ENCODE measurements at regions of chr11 and their contacts with region 1.

Region 1: GRCh38 chr11:12673924-12674570 is at the start of gene TEAD1:
- DNase-seq: peak; percentile 96
- ATAC-seq: peak; percentile 99
- total RNA-seq, gene TEAD1: 126 TPM

Region 2: GRCh38 chr11:11848891-11849746 is 824.9 kb before region 1 on chr11:
- intact Hi-C with region 1: no loop called
- DNase-seq: peak; percentile 67
- ATAC-seq: peak; percentile 82

Region 3: DNA sequence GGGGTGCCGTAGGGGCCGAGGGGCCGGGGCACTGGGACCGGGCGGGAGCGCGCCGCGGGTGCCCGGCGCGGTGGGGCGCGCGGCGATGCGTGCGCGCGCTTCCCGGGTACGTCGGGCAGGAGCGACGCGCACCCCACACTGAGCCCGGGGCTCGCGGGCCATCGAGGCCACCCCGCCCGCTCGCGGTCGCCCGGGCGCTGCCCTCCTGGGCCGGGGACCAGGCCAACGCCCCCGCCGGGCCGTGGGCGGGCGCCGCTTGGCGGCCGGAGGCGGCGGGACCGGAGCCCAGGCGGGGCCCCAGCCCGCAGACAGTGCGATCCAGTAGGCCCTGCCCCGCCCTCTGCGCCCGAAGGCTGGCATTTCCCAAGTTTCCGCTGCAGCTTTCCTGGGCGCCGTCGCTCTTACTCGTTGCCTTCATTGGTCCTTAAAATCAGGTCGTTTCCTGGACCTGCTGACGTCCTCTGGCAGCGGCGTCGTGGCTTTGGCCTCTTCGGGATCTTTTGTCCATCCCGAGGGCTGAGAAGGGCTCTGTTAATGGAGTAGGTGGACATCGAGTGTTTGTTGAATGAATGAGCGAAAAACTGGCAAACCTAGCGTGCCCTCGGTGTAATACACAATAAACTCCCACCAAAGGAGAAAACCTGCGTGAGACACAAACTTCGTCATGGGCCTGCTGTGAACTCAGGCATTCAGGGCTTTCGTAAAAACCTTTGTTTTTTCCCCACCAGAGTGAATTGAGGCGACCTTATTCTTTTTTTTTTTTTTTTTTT is 296.0 kb before region 1 on chr11:
- intact Hi-C with region 1: loop called (anchors 2 kb)
- DNase-seq: peak; percentile 85
- ATAC-seq: peak; percentile 58

Region 4: GRCh38 chr11:12556788-12557384 is 117.2 kb before region 1 on chr11:
- intact Hi-C with region 1: loop called (anchors 5 kb)
- DNase-seq: peak; percentile 84
- ATAC-seq: peak; percentile 72

Region 5: DNA sequence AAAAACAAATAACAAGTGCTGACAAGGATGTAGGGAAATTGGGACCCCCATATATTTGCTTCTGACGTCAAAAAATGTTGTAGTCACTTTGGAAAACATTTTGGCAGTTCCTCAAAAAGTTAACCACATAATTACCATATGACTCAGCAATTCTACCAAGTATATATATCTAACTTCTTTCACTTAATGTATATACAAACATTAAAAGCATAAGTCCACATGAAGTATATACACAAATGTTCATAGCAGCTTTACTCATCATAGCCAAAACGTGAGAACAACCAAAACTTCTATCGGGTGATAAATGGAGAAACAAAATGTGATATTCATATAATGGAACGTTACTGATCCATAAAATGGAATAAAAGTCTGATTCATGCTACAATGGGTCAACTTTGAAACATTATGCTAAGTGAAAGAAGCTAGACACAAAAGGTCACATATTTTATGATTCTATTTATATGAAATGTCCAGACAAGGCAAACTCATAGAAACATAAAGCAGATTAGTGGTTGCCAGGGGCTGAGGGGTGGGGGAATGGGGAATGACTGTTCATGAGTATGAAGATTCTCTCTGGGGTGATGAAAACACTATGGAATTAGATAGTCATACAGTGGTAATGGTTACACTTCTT is 48.5 kb before region 1 on chr11:
- intact Hi-C with region 1: no loop called
- DNase-seq: no peak
- ATAC-seq: no peak

Region 6: DNA sequence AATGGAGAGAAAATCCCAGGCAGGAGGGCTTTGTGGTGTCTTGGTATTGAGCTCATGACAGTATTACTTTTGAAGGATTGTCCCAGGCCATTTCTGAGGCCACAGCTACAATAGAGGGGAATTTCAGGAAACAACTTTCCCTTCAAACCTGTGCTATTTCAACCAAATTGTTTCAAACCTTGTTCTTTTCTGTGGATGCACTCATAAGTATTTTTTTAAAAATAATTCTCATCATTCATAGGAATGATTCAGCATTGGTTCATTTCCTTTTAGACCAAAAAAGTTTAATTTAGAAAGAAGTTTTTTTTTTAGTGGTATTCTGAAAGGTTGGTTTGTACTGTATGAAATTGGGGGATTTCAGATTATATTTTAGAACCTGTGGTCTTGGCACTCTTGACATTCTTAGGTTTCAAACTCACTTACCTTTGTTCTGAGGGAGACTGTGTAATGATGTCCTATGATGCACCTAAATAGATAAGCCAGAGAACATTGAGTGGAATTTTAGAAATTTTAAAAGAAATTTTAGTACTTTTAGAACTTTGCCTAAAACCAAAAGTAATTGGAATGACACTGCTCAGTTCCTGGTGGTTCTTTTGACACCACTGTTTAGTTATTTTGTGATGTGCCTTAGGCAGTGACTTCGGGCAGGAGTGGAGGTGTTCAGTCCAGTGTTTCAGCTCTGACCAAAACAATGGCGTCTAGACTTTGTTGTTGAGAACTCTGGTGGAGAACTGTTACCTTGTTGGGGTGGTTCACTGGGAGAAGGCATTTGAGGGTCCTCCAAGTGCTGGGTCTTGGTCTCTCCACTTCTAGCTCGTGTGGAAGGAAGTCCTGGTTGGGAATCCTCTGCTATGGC is 12.4 kb after region 1 on chr11:
- intact Hi-C with region 1: no loop called
- DNase-seq: no peak
- ATAC-seq: no peak

Region 7: DNA sequence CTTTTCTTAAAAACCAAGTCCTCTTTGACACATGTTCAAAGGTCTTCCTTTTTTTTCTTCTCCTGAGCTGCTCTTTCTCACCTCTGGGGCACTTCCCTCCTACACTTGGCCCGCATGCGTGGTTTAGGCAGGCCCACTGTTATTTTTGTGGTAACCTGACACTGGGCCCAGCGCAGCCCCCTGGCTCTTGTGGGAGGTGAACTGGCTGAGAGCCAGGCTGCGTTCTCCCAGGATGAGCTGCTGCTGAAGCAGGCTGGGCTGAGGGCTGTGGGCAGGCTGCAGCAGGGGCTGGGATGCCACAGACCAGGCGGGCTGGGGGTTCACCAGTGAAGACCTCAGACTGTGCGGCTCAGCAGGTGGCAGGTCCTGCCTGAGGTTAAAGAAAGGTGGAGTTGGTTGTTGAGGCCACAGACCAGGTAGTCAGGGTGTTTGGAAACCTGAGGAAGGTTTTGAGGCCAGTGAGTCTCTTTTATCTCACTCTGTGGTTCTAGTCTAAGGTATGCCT is 72.6 kb after region 1 on chr11:
- intact Hi-C with region 1: loop called (anchors 2 kb)
- DNase-seq: peak; percentile 77
- ATAC-seq: peak; percentile 76

Region 8: DNA sequence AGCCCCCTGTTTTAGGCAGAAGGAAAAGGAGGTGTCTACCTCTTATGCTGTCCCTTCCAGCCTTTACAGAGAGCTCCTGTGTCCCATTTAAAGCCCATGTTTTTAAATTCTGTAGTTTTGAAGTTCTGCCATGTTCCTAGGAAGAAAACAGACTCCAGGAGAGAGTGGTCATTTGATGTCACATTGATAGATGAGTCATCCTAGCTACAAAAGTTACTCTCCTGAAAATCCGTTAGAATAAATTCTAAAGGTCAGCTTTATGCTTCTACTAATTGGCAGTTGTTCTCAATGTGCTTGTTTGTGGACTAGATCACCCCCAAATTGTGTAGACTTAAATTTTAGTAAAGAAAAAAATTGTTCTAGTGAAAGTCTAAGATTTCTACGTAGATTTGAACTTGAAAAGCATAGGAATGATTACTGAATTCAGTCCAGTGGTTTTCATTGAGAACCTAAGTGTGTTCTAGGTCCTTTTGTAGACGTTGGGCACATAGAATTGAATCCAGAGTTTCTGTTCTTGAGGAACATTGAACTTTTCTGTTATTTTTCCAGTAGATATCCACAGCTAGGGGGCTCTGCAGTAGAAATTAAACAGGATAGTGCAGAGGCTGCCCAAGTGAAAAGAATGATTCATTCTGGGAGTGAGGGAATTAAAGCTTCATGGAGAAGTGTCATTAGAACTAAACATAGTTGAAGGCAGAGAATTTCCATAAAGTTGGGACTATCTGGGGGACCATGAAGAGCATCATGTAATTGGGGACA is 194.4 kb after region 1 on chr11:
- intact Hi-C with region 1: no loop called
- DNase-seq: no peak
- ATAC-seq: no peak

Region 9: GRCh38 chr11:12888525-12889158 is 214.6 kb after region 1 on chr11:
- intact Hi-C with region 1: loop called (anchors 2 kb)
- DNase-seq: peak; percentile 88
- ATAC-seq: peak; percentile 83